Calu3 (cell line): ENCODE measurements at regions of chr3 and their contacts with region 1.

Region 1: GRCh38 chr3:30623351-30623750 is 16.9 kb downstream of the TGFBR2 start:
- DNase-seq: no peak
- H3K4me3 Mint-ChIP-seq: no peak overlapping the region
- H3K27ac Mint-ChIP-seq: no peak overlapping the region
- H3K4me1 Mint-ChIP-seq: peaks cover 36% of the 10 kb centered on the region
- H3K27me3 Mint-ChIP-seq: no peaks in the 10 kb centered on the region
- CTCF ChIP-seq: no peak

Region 2: GRCh38 chr3:30551266-30551665 is 72.1 kb before region 1 on chr3:
- CTCF ChIA-PET with region 1: interaction called, 14 read pairs
- intact Hi-C with region 1: no loop called
- DNase-seq: no peak
- H3K4me3 Mint-ChIP-seq: no peak overlapping the region
- H3K27ac Mint-ChIP-seq: no peak overlapping the region
- H3K4me1 Mint-ChIP-seq: peaks cover 45% of the 10 kb centered on the region
- H3K27me3 Mint-ChIP-seq: no peaks in the 10 kb centered on the region
- CTCF ChIP-seq: no peak

Region 3: GRCh38 chr3:30611613-30612436 is 11.5 kb before region 1 on chr3:
- CTCF ChIA-PET with region 1: interaction called, 11 read pairs
- intact Hi-C with region 1: no loop called
- DNase-seq: no peak
- H3K4me3 Mint-ChIP-seq: peak overlapping the region; percentile 66
- H3K27ac Mint-ChIP-seq: peak overlapping the region; percentile 67
- H3K4me1 Mint-ChIP-seq: peaks cover 68% of the 10 kb centered on the region
- H3K27me3 Mint-ChIP-seq: no peaks in the 10 kb centered on the region
- CTCF ChIP-seq: no peak